ENCODE measurements at regions of chr11 and their contacts with region 1.

Region 1: DNA sequence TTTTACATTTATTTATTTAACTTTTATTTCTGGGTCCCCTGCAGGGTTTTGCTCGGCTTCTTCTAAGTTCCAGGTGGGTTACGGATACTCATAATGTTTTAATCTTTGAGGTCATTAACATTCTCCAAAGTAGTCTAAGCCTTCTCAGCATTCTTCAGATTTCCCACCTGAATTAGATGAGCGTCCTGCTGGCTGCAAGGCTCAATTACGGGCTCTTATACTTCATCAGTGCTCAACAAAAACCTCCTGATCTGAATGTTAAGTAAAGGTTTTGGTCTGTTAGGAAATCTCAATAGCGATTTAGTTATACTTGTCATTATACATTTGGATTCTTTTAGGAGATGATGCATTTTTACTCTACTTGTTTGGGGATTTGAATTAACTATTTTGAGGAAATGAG is 27.3 kb upstream of the NFRKB start:
- DNase-seq: no peak
- ATAC-seq: no peak
- H3K4me3 ChIP-seq: no peak overlapping the region
- H3K27ac ChIP-seq: no peak overlapping the region
- H3K4me1 ChIP-seq: no peaks in the 10 kb centered on the region
- H3K27me3 ChIP-seq: no peaks in the 10 kb centered on the region
- CTCF ChIP-seq: no peak
- EP300 ChIP-seq: no peak
- POLR2A ChIP-seq: no peak
- RAD21 ChIP-seq: no peak

Region 2: GRCh38 chr11:130069684-130070108 is 147.0 kb after region 1 on chr11 and contains the start of gene APLP2:
- CTCF ChIA-PET with region 1: interaction called, 9 read pairs
- POLR2A ChIA-PET with region 1: no interaction called
- RAD21 ChIA-PET with region 1: no interaction called
- SMC1A ChIA-PET with region 1: interaction called, 7 read pairs
- in situ Hi-C with region 1: no loop called
- intact Hi-C with region 1: loop called (anchors 5 kb)
- DNase-seq: peak; percentile 75
- ATAC-seq: peak; percentile 93
- H3K4me3 ChIP-seq: peak within 1 kb of the TSS; percentile 76
- H3K27ac ChIP-seq: no peak within 1 kb of the TSS
- H3K4me1 ChIP-seq: no peaks in the 10 kb centered on the region
- H3K27me3 ChIP-seq: peaks cover 0 to 4% of the 10 kb centered on the region in 2 experiments; a peak in 1 of 4 replicates
- CTCF ChIP-seq: no peak
- EP300 ChIP-seq: no peak
- POLR2A ChIP-seq: peak; percentile 97
- RAD21 ChIP-seq: no peak
- polyA plus RNA-seq, gene APLP2: 2.3 to 4.6 TPM